ENCODE measurements at regions of chr17 and their contacts with region 1.

Region 1: DNA sequence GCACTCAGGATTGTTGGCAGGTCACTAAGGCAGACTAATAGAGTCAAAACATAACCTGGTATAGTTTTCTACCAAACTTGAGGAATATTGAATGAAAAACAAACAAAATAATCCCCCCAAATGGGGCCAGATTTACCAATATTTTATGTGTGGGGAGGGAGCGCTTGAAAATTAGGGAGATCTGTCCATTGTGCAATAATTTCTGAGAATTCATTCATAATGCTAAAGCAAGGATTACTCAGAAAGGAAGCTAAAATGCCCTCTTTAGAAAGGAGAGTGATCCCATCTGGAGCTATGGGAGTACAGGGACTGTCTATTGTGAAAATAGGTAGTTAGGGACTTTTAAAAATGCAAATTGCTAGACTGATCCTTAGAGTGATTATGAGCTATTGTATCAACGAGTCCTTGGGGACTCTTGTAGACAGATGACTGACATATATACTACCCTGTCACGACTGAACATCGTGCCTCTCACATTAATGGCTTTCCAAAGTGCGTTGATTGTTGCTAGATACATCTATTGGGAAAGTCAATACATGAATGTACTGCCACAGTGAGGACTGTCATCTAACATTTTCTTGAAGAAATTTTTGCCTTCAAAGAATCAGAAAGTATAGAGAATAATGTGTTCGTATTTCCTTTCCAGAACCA is 193.7 kb downstream of the AATF start:
- DNase-seq: no peak

Region 2: GRCh38 chr17:36553459-36553858 is 589.0 kb before region 1 on chr17:
- intact Hi-C with region 1: no loop called
- DNase-seq: no peak

Region 3: DNA sequence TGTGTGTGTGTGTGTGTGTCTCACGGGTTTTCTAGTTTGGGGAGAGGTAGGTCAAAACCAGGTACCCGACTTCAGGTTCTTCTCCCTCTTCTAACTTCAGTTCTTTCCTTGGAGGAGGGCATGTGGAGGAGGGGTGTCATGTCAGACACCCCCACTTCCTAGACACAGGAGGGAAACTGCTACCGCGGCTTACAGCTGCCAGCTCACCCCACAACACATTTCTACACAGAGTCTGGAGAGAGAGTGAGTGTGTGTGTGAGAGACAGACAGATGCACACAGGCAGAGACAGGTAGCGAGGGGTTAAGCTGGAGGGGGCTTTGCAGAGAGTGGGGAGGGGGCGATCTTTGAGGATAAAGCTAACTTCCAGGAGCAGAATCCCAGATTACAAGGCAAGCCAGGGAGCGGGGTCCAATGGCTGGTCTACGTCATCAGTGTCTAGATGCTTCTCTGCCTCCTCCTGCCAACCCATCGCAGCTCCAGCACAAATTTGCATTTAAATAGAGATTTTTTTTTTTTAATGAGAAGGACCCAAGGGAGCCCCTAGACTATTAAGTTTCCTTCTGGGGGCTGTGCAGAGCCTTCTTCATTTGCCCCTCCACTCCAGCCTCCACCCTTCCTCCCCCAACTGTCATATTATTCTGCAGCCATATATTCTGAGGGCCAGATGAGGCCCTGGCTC is 492.2 kb before region 1 on chr17:
- intact Hi-C with region 1: loop called in 1 of 2 experiments (anchors 5 kb)
- DNase-seq: no peak

Region 4: GRCh38 chr17:37089956-37090355 is 52.5 kb before region 1 on chr17:
- intact Hi-C with region 1: no loop called
- DNase-seq: no peak